Dorsolateral prefrontal cortex (tissue), 120 donors: ENCODE measurements at regions of chr4 and their contacts with region 1.

Region 1: GRCh38 chr4:118740869-118741268 is 55.7 kb downstream of the METTL14 start:
- DNase-seq: no peak
- H3K4me3 ChIP-seq: peak overlapping the region in 15 of 59 donors; percentile 0 to 38 (median 7)
- H3K27ac ChIP-seq: peak overlapping the region in 8 of 59 donors; percentile 9 to 32 (median 20)
- H3K27me3 ChIP-seq: no peaks in the 10 kb centered on the region
- CTCF ChIP-seq: peak; percentile 48 to 85 (median 66)

Region 2: DNA sequence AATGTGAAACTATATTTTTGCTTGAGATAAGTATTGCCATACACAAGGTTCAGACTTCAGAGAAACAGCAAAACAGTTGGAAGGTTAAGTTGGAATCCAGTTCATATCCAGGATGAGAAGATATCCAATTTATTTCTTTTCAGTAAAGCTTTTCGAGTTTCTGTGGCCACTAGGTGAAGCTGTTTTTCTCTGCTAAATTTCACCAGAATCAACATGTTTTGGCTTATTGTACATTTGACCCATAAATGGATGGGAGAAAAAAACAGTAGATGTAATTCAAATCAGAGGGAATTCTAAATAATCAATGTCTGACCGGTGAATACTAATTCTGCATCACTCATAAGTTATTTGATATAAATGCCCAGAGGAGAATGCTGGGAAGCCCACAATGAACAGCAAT is 64.7 kb before region 1 on chr4:
- intact Hi-C with region 1: no loop called
- DNase-seq: no peak
- H3K4me3 ChIP-seq: no peak overlapping the region
- H3K27ac ChIP-seq: no peak overlapping the region
- H3K27me3 ChIP-seq: no peaks in the 10 kb centered on the region
- CTCF ChIP-seq: peak in 2 of 56 donors; percentile 10 to 16

Region 3: DNA sequence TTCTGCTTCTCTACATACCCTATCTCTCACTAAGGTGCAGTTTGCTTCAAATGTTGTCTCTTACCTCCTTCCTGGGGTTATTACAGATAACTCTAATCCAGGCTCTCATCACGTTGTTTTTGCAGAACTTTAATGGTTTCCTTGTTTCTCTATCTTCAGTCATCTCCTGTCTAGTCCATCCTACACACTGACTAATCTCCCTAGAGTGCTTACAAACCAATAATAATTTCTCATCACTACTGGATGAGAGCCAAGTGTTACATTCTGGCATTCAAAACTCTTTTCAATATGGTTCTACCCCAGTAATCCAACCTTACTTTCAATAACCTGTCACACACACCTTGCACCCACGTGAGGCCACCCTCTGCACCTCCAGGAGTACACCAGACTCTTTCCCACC is 233.9 kb after region 1 on chr4:
- intact Hi-C with region 1: loop called in 1 of 2 experiments (anchors 10 kb)
- DNase-seq: no peak
- H3K4me3 ChIP-seq: no peak overlapping the region
- H3K27ac ChIP-seq: no peak overlapping the region
- H3K27me3 ChIP-seq: no peaks in the 10 kb centered on the region
- CTCF ChIP-seq: no peak